ENCODE measurements at regions of chr5 and their contacts with region 1.

Region 1: DNA sequence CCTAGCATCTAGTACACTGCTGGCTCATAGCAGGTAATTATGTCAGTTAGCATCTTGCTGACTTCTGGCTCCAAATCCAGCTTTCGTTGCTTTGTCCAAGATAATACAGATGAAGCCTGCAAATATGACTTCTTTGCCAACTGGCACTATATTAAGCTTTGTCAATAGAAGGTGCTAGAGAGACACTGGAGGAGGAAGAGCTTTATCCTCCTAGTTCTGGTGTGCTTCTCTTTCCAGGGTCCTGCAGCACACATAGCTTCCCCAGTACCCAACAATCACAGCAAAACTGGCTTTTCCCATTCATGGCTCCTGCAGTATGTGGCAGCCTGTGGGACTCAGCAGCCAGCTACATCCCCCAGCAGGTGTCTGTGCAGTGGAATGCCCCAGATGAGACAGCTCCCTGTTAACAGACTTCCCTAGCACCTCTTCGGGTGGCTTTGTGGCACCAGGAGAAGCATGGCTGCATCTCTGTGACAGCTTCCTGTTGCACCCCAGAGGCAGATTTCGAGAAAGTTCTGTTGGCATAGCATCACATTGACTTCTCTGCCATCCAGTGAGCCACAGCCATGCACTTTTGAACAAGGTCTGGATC is 147.8 kb downstream of the OXCT1 start:
- DNase-seq: peak; percentile 26
- H3K4me3 ChIP-seq: no peak overlapping the region
- H3K27ac ChIP-seq: no peak overlapping the region
- H3K4me1 ChIP-seq: no peaks in the 10 kb centered on the region
- H3K27me3 ChIP-seq: no peaks in the 10 kb centered on the region
- CTCF ChIP-seq: peak in 1 of 2 donors; percentile 21
- POLR2A ChIP-seq: no peak

Region 2: DNA sequence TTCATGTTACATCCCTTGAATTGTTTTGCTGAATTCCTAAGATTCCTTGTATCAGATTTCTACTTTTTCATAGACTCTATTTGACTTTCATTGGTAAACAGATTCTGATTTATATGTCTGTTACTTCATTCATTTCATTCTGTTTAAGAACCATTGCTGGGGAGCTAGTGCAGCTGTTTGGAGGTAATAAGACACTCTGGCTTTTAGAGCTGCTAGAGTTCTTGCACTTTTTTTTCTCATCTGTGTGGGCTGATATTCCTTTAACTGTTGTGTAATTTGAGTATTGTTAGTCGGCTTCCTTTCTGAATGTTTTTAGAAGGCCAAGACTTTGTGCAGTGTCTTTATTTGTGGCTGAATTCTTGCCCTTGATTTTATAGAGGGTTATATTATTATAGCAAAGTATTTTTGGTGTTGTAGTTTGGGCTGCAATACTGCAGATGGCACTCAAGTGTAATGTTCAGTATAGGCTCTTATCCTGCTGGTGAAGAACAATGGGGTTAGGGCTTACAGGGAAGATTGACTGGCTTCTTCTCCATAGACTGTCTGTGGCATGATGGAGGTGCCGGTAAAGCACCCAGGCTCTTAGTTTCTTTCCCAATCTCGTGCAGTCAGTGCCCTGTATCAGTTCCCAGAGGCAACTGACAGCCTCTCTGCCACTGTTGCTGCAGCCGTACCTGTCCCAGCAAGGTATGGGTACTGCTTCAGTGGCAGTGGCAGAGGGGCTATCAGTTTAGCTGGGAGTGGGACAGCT is 14.4 kb before region 1 on chr5:
- CTCF ChIA-PET with region 1: interaction called, 11 read pairs
- POLR2A ChIA-PET with region 1: no interaction called
- dilution Hi-C with region 1: no loop called
- intact Hi-C with region 1: no loop called
- DNase-seq: peak; percentile 57
- H3K4me3 ChIP-seq: no peak overlapping the region
- H3K27ac ChIP-seq: no peak overlapping the region
- H3K4me1 ChIP-seq: no peaks in the 10 kb centered on the region
- H3K27me3 ChIP-seq: peaks cover 4 to 16% of the 10 kb centered on the region in 2 experiments
- CTCF ChIP-seq: peak; percentile 51 to 52
- POLR2A ChIP-seq: no peak

Region 3: GRCh38 chr5:41747301-41747700 is 24.8 kb after region 1 on chr5:
- CTCF ChIA-PET with region 1: no interaction called
- POLR2A ChIA-PET with region 1: no interaction called
- dilution Hi-C with region 1: no loop called
- intact Hi-C with region 1: no loop called
- DNase-seq: peak; percentile 77
- H3K4me3 ChIP-seq: no peak overlapping the region
- H3K27ac ChIP-seq: no peak overlapping the region
- H3K4me1 ChIP-seq: peaks cover 8% of the 10 kb centered on the region
- H3K27me3 ChIP-seq: no peaks in the 10 kb centered on the region
- CTCF ChIP-seq: no peak
- POLR2A ChIP-seq: no peak